ENCODE measurements at regions of chr5 and their contacts with region 1.

Region 1: DNA sequence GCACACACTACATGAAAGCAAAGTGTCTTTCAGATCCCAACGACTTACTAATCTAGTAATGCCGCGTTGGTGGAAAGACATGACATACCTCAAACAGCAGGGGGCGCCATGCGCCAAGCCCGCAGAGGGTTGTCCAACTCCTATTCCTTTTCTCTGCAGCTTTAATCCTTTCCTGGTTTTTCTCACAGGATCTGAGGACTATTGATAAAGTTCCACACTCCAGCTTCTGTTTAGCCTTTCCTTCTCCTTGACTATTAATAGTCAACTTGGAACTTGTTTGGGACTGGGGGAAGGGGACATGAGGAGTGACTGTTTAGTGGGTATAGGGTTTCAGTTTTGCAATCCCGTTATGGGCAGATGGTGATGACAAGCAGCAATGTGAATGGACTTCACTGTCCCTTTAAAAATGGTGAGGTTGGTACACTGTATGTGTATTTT is 62.9 kb downstream of the OTULIN start:
- DNase-seq: peak; percentile 69 to 87
- ATAC-seq: peak; percentile 70 to 86 (median 78)
- H3K4me3 ChIP-seq: no peak overlapping the region
- H3K4me3 Mint-ChIP-seq: no peak overlapping the region
- H3K27ac ChIP-seq: no peak overlapping the region
- H3K27ac Mint-ChIP-seq: no peak overlapping the region
- H3K4me1 ChIP-seq: peaks cover 2% of the 10 kb centered on the region
- H3K4me1 Mint-ChIP-seq: peaks cover 0 to 4% of the 10 kb centered on the region in 2 donors
- H3K27me3 ChIP-seq: no peaks in the 10 kb centered on the region
- H3K27me3 Mint-ChIP-seq: no peaks in the 10 kb centered on the region
- CTCF ChIP-seq: peak; percentile 96

Region 2: GRCh38 chr5:14895301-14895700 is 167.9 kb after region 1 on chr5:
- intact Hi-C with region 1: loop called (anchors 1 kb)
- DNase-seq: peak in 1 of 2 donors; percentile 33
- ATAC-seq: peak in 2 of 3 donors; percentile 55 to 58
- H3K4me3 ChIP-seq: no peak overlapping the region
- H3K4me3 Mint-ChIP-seq: no peak overlapping the region
- H3K27ac ChIP-seq: no peak overlapping the region
- H3K27ac Mint-ChIP-seq: no peak overlapping the region
- H3K4me1 ChIP-seq: no peaks in the 10 kb centered on the region
- H3K4me1 Mint-ChIP-seq: no peaks in the 10 kb centered on the region
- H3K27me3 ChIP-seq: no peaks in the 10 kb centered on the region
- H3K27me3 Mint-ChIP-seq: peaks cover 6 to 7% of the 10 kb centered on the region in 2 donors
- CTCF ChIP-seq: peak; percentile 30

Region 3: DNA sequence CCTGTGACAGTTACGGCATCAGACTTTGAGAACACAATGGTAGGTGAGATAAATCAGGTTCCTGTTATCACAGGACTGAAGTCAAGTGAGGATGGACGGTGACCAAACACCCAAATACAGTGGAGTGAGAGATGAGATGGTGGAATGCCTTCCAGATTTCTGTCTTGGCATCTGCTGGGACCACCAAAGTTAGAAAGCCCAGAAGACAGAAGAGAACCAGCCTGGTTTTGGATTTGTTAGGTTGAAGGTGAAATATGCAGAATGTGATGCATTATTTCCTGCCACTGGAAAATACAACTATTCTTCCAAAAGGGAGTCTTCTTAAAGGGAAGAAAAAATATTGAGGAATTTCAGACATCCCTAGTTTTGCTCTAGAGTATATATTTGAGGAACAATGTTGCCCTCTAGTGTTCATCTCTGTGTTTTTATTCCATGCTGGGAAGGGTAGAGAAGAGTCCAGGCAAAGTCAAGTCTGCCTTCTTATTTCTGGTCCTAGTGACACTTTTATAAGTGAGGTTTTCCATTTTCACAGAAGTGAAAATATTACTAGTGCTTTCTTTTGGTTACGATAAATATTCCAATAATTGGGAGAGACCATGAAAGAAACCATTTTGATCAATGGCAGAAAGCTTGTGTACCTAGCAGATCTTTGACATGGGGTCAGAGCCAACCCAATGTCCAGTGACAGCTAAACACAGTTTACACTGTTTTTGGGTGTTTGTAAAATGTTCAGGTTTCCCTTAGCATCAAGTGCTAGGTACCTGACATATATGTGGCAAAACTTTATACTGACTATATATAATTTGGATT is 286.4 kb after region 1 on chr5:
- intact Hi-C with region 1: loop called (anchors 1 kb)
- DNase-seq: peak in 1 of 2 donors; percentile 62
- ATAC-seq: peak; percentile 61 to 70 (median 65)
- H3K4me3 ChIP-seq: no peak overlapping the region
- H3K4me3 Mint-ChIP-seq: no peak overlapping the region
- H3K27ac ChIP-seq: no peak overlapping the region
- H3K27ac Mint-ChIP-seq: no peak overlapping the region
- H3K4me1 ChIP-seq: no peaks in the 10 kb centered on the region
- H3K4me1 Mint-ChIP-seq: no peaks in the 10 kb centered on the region
- H3K27me3 ChIP-seq: no peaks in the 10 kb centered on the region
- H3K27me3 Mint-ChIP-seq: peaks cover 0 to 6% of the 10 kb centered on the region in 2 donors
- CTCF ChIP-seq: peak; percentile 76